ENCODE measurements at regions of chr14 and their contacts with region 1.

Region 1: DNA sequence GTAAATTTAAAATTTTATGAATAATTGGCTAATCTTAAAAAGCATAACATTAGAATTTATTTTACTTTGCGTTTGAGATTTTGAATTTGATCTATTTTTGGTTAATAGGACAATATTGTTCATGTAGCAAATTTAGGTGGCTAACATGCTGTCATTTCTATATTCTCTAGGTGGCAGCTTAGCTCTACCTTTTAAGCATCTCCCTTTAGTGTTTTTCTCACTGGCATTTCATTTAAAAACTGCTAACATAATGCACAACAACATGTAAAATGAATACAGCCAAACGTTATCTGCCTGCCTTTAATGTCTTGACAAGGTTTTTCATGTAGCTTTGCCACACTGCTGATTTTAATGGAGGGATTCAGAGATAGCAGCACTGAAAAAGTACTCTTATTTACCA is 272.4 kb upstream of the FBXO33 start:
- DNase-seq: no peak
- ATAC-seq: no peak
- H3K4me3 ChIP-seq: no peak overlapping the region
- H3K27ac ChIP-seq: no peak overlapping the region
- H3K4me1 ChIP-seq: no peaks in the 10 kb centered on the region
- H3K27me3 ChIP-seq: no peaks in the 10 kb centered on the region
- CTCF ChIP-seq: no peak; a peak in 1 of 6 replicates
- EP300 ChIP-seq: no peak
- POLR2A ChIP-seq: no peak
- RAD21 ChIP-seq: peak; percentile 53

Region 2: DNA sequence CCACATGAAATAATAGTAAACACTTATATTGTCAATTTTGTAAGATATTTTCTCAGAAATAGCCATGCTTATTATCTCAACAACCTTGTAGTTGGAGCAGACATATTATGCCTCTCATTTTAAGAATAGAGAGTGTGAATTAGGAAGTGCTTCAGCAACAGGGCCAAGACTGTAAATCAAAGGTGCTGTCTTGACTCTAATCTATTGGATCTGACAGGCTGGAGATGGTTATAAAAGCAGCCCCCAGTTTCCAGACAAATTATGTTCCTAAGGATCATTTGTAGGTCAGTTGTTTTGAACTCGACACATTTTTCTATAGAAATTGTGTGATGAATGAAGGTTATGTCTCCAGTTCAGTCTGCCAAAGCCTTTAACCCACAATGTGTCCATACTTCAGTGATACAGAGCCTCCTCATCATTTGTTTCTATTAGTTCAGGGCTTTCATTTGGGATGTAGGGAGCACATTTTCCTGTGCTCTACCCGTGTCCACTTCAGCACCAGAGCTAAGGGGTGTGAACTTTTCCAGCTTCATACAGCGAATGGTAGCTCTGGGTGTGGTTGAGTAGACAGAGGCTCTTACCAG is 12.5 kb after region 1 on chr14:
- CTCF ChIA-PET with region 1: interaction called, 5 read pairs
- POLR2A ChIA-PET with region 1: no interaction called
- RAD21 ChIA-PET with region 1: no interaction called
- SMC1A ChIA-PET with region 1: interaction called, 13 read pairs
- in situ Hi-C with region 1: no loop called
- intact Hi-C with region 1: no loop called
- DNase-seq: no peak
- ATAC-seq: no peak
- H3K4me3 ChIP-seq: no peak overlapping the region
- H3K27ac ChIP-seq: no peak overlapping the region
- H3K4me1 ChIP-seq: no peaks in the 10 kb centered on the region
- H3K27me3 ChIP-seq: no peaks in the 10 kb centered on the region
- CTCF ChIP-seq: no peak
- EP300 ChIP-seq: no peak
- POLR2A ChIP-seq: no peak
- RAD21 ChIP-seq: no peak

Region 3: DNA sequence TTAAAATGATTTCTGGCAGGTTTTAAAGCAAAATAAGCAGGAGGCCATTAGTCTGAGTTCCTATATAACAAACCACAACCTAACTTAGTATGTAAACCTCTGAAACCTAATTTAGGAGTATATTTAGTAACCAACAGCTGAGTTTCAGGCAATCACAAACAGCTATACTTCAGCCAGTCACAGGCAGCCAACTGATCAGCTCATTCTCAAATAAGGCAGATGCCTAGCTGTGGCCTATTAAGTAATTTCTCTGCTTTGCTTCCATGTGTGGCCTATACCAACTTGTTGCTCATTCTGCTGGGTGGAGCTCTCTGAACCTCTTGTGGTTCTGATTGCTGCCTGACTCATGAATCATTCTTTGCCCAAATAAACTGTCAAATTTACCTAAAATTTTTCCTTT is 136.5 kb after region 1 on chr14:
- CTCF ChIA-PET with region 1: no interaction called
- POLR2A ChIA-PET with region 1: no interaction called
- RAD21 ChIA-PET with region 1: no interaction called
- SMC1A ChIA-PET with region 1: no interaction called
- in situ Hi-C with region 1: no loop called
- intact Hi-C with region 1: no loop called
- DNase-seq: no peak
- ATAC-seq: peak; percentile 59
- H3K4me3 ChIP-seq: no peak overlapping the region
- H3K27ac ChIP-seq: no peak overlapping the region
- H3K4me1 ChIP-seq: no peaks in the 10 kb centered on the region
- H3K27me3 ChIP-seq: no peaks in the 10 kb centered on the region
- CTCF ChIP-seq: no peak
- EP300 ChIP-seq: no peak
- POLR2A ChIP-seq: no peak
- RAD21 ChIP-seq: no peak

Measured in GM12878 (cell line).